Stomach (tissue), 19 donors: ENCODE measurements at regions of chr18 and their contacts with region 1.

Region 1: GRCh38 chr18:11976846-11977245 is 4.5 kb upstream of the IMPA2 start:
- DNase-seq: peak in 1 of 2 donors; percentile 64
- H3K4me3 ChIP-seq: no peak overlapping the region
- H3K27ac ChIP-seq: peak overlapping the region in 1 of 5 donors; percentile 14
- H3K4me1 ChIP-seq: peaks cover 5 to 17% (median 13%) of the 10 kb centered on the region in 4 donors
- H3K27me3 ChIP-seq: no peaks in the 10 kb centered on the region
- CTCF ChIP-seq: no peak
- EP300 ChIP-seq: no peak
- POLR2A ChIP-seq: no peak

Region 2: DNA sequence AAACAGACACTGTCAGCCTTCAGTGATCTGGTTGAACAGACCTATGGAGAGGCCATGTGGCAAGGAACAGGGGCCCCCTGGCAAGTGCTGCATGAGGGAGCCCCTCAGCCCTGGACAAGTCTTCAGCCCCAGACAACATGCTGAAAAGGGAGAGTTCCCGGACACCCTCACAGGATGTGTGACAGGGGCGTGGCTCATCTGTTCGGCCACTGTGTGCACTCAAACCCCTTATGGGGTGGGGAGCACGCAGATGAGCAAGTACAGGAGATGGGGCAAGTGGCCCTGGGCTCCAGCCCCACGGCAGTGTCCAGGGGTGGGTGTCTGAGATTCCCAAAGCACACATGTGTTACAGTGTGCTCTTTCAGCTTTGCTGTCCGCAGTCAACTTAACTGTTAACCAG is 33.3 kb before region 1 on chr18:
- intact Hi-C with region 1: loop called (anchors 5 kb)
- DNase-seq: no peak
- H3K4me3 ChIP-seq: no peak overlapping the region
- H3K27ac ChIP-seq: no peak overlapping the region
- H3K4me1 ChIP-seq: peaks cover 11 to 23% (median 19%) of the 10 kb centered on the region in 4 donors
- H3K27me3 ChIP-seq: no peaks in the 10 kb centered on the region
- CTCF ChIP-seq: no peak
- EP300 ChIP-seq: no peak
- POLR2A ChIP-seq: no peak